HCT116 (cell line): ENCODE measurements at regions of chr11 and their contacts with region 1.

Region 1: GRCh38 chr11:128587452-128587851 is at the start of gene ETS1:
- DNase-seq: no peak
- ATAC-seq: peak; percentile 67
- H3K4me3 ChIP-seq: no peak within 1 kb of the TSS
- H3K27ac ChIP-seq: no peak within 1 kb of the TSS
- H3K4me1 ChIP-seq: no peaks in the 10 kb centered on the region
- H3K27me3 ChIP-seq: peaks cover 95% of the 10 kb centered on the region
- CTCF ChIP-seq: no peak
- POLR2A ChIP-seq: no peak
- RAD21 ChIP-seq: no peak
- total RNA-seq, gene ETS1: 9.2 TPM

Region 2: GRCh38 chr11:128814856-128815705 is 227.6 kb after region 1 on chr11:
- CTCF ChIA-PET with region 1: no interaction called
- POLR2A ChIA-PET with region 1: no interaction called
- RAD21 ChIA-PET with region 1: no interaction called
- intact Hi-C with region 1: loop called (anchors 1 kb)
- DNase-seq: no peak
- ATAC-seq: peak; percentile 57; the same call in 1 of the 2 replicates
- H3K4me3 ChIP-seq: no peak overlapping the region
- H3K27ac ChIP-seq: no peak overlapping the region
- H3K4me1 ChIP-seq: no peaks in the 10 kb centered on the region
- H3K27me3 ChIP-seq: peaks cover 20% of the 10 kb centered on the region
- CTCF ChIP-seq: no peak
- POLR2A ChIP-seq: no peak
- RAD21 ChIP-seq: no peak